ENCODE measurements at regions of chr9 and their contacts with region 1.

Region 1: DNA sequence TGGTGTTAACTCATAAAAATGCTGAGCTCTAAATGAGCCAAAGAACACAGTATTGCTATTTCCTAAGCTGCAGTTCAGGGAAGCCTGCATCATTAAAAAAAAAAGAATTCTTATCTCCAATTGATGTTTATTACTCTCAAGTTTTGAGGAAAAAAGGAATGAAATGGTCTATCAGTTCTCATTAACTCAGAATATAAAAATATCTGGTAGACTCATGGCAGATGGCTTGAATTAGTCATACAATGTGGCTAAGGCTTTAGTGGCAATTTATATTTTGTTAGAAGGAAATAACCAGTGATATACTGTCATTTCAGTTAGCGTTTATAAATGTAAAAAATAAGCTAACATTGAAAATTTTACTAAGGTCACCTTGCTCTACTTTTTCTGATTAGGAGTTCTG is 1403.4 kb upstream of the C9orf72 start:
- DNase-seq: no peak
- ATAC-seq: no peak
- H3K4me3 ChIP-seq: no peak overlapping the region
- H3K27ac ChIP-seq: no peak overlapping the region
- H3K4me1 ChIP-seq: no peaks in the 10 kb centered on the region
- H3K27me3 ChIP-seq: no peaks in the 10 kb centered on the region
- CTCF ChIP-seq: no peak
- EP300 ChIP-seq: no peak
- POLR2A ChIP-seq: no peak
- RAD21 ChIP-seq: no peak

Region 2: DNA sequence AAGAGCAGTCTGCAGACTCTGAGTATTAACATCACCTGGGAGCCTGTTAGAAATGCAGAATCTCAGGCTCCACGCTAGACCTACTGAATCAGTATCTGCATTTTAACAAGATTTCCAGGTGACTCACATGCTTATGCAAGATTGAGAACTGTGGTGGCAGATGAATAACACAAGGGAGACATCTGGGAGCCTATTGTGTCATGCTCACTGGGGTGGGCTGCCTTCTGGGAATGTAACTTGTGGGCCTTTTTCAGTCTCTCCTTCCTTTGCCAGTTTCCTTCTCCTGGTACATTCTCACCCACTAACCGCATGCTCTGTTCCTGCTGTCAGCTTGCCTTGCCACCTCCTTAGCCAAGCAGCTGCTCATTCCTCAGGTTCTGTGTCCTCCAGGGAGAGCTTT is 1226.8 kb before region 1 on chr9:
- CTCF ChIA-PET with region 1: no interaction called
- POLR2A ChIA-PET with region 1: no interaction called
- in situ Hi-C with region 1: no loop called
- intact Hi-C with region 1: loop called (anchors 5 kb)
- DNase-seq: no peak
- ATAC-seq: no peak
- H3K4me3 ChIP-seq: no peak overlapping the region
- H3K27ac ChIP-seq: no peak overlapping the region
- H3K4me1 ChIP-seq: no peaks in the 10 kb centered on the region
- H3K27me3 ChIP-seq: no peaks in the 10 kb centered on the region
- CTCF ChIP-seq: no peak
- EP300 ChIP-seq: no peak
- POLR2A ChIP-seq: no peak
- RAD21 ChIP-seq: no peak

Region 3: GRCh38 chr9:28915256-28915930 is 61.3 kb before region 1 on chr9:
- CTCF ChIA-PET with region 1: no interaction called
- POLR2A ChIA-PET with region 1: no interaction called
- in situ Hi-C with region 1: no loop called
- intact Hi-C with region 1: no loop called
- DNase-seq: no peak
- ATAC-seq: no peak
- H3K4me3 ChIP-seq: no peak overlapping the region
- H3K27ac ChIP-seq: no peak overlapping the region
- H3K4me1 ChIP-seq: no peaks in the 10 kb centered on the region
- H3K27me3 ChIP-seq: no peaks in the 10 kb centered on the region
- CTCF ChIP-seq: no peak
- EP300 ChIP-seq: no peak
- POLR2A ChIP-seq: no peak
- RAD21 ChIP-seq: no peak

Region 4: DNA sequence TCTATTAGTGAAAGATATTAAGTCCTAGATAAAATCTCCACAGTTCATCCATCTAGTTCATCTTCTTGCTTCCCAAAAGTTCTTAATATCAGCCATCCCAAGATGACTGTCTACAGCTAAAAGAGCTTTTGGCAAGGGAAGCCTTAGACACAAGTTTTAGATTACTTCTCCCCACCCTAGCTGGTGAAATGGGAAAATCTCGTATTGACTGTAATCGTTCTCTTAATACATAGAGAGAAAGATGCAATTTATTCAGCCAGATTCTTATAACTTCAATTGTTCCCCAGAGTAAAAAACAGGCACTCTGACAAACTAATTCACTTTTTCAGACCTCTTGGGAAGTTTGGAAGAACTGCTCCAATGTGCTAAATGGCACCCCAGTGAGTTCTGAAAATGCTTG is 36.2 kb after region 1 on chr9:
- CTCF ChIA-PET with region 1: no interaction called
- POLR2A ChIA-PET with region 1: no interaction called
- in situ Hi-C with region 1: no loop called
- intact Hi-C with region 1: no loop called
- DNase-seq: no peak
- ATAC-seq: no peak
- H3K4me3 ChIP-seq: no peak overlapping the region
- H3K27ac ChIP-seq: no peak overlapping the region
- H3K4me1 ChIP-seq: no peaks in the 10 kb centered on the region
- H3K27me3 ChIP-seq: no peaks in the 10 kb centered on the region
- CTCF ChIP-seq: no peak
- EP300 ChIP-seq: no peak
- POLR2A ChIP-seq: no peak
- RAD21 ChIP-seq: no peak

Measured in HepG2 (cell line).